Motor neuron (in vitro differentiated cells): ENCODE measurements at regions of chr6 and their contacts with region 1.

Region 1: GRCh38 chr6:77457720-77458349 is 5.5 kb downstream of the HTR1B start:
- ATAC-seq: peak; percentile 20 to 87 (median 76)
- H3K4me3 ChIP-seq: no peak overlapping the region
- H3K27ac ChIP-seq: no peak overlapping the region
- H3K4me1 ChIP-seq: no peaks in the 10 kb centered on the region

Region 2: DNA sequence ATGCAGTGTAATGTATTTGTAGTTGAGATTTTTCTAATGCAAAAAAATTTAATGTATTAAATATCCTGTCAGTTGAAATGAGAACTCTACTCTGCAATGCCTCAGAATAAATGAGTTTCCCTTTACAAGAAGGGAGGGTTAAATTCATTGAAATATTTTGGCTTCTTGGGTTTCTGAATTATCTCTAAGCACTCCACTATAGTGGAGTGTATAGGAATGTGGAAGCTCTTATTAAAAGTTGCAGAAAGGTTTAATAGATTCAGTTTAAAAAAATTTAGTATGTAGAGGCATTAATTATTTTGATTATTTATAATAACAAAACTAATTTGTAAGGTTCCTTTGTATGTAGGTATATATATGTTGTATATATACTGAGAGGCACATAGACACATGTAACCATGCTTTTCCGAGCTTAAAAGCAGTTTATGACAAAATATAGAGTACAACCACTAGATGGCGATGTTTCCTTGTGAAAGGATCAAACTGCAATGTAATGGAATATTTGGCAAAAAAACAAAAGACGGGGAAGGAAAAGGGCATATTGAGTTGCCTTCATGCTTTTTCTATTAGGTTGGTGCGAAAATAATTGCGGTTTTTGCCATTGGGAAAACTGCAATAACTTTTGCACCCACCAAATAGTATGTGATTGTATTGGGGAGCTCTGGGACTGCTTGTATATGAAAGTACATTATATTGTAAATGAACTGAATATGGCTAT is 1564.6 kb before region 1 on chr6:
- in situ Hi-C with region 1: loop called in 1 of 9 experiments (anchors 25 kb)
- ATAC-seq: peak in 7 of 8 experiments; percentile 45 to 76 (median 68)
- H3K4me3 ChIP-seq: no peak overlapping the region
- H3K27ac ChIP-seq: no peak overlapping the region
- H3K4me1 ChIP-seq: peaks cover 0 to 3% of the 10 kb centered on the region in 2 donors

Region 3: DNA sequence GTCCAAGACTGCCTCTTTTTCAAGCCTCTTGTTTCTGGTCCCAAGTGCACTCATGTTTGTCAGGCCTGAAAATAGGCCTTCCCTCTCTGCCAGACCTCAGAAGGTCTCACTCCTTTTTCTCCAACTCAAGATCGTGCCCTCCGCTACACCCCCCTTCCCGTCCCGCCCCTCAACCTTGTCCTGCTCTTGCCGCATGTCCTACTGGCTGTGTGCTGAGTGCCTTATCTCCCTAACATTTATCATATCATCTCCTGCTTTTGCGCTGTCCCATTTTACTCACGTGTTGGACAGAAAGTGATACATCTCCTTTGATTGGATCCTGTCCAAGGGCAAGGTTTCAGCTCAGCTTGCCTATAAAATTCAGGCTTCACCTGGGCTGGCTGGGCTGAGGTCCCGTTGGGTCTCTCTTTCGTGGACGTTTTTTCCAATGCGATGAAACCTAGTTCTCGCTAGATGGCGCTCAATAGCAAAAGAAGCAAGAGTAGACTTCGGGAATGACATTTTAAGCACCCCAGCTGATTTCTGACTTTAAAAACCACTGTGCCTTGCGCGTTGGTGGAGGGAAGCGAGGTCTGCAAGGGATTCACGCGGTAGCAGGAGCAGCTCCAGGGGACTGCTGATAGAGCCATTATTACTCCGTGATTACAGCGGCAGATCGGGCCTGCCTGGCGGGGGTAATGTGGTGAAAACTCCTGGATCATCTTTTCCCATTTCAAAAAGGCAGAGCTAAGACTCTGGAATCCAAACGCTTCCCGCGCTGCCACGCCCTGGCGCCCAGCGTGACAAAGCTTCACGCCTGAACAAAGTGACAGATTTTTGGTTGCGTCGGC is 1523.0 kb before region 1 on chr6:
- in situ Hi-C with region 1: loop called in 4 of 9 experiments (anchors 25 kb)
- ATAC-seq: peak; percentile 82 to 98 (median 94)
- H3K4me3 ChIP-seq: peak overlapping the region; percentile 27 to 43 (median 32)
- H3K27ac ChIP-seq: no peak overlapping the region
- H3K4me1 ChIP-seq: peaks cover 0 to 3% of the 10 kb centered on the region in 2 donors

Region 4: GRCh38 chr6:75952128-75952527 is 1505.7 kb before region 1 on chr6:
- in situ Hi-C with region 1: loop called in 5 of 9 experiments (anchors 25 kb)
- ATAC-seq: peak in 2 of 8 experiments; percentile 57
- H3K4me3 ChIP-seq: no peak overlapping the region
- H3K27ac ChIP-seq: no peak overlapping the region
- H3K4me1 ChIP-seq: no peaks in the 10 kb centered on the region

Region 5: DNA sequence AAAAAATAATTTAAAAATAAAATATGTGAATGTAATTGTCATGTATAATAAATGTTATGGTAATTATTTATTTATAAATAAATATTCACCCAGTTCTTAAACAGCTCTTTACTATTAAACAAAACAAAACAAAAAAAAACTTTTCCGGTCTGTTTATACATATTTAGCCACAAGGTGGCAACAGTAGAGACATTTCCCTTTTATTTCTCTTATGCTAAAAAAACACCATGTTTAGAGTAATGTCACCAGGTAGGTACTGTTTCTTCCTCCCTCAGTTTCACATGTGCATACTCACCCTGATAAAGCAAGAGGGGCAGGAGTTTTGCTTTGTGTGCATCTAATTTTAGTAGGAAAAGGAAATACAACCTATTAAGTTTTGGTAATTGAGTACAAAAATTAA is 775.0 kb before region 1 on chr6:
- in situ Hi-C with region 1: loop called in 4 of 9 experiments (anchors 10 to 25 kb)
- ATAC-seq: no peak
- H3K4me3 ChIP-seq: no peak overlapping the region
- H3K27ac ChIP-seq: no peak overlapping the region
- H3K4me1 ChIP-seq: peaks cover 0 to 2% of the 10 kb centered on the region in 2 donors